Spleen (tissue), 13 donors: ENCODE measurements at regions of chr12 and their contacts with region 1.

Region 1: GRCh38 chr12:95820102-95820703 is 29.6 kb upstream of the NTN4 start:
- DNase-seq: no peak
- H3K4me3 ChIP-seq: no peak overlapping the region
- H3K27ac ChIP-seq: no peak overlapping the region
- H3K4me1 ChIP-seq: peaks cover 0 to 5% (median 0%) of the 10 kb centered on the region in 6 donors
- H3K27me3 ChIP-seq: peaks cover 0 to 3% (median 0%) of the 10 kb centered on the region in 7 donors
- CTCF ChIP-seq: peak in 8 of 11 experiments; percentile 8 to 72 (median 54)
- POLR2A ChIP-seq: no peak

Region 2: GRCh38 chr12:95096852-95097251 is 723.4 kb before region 1 on chr12:
- intact Hi-C with region 1: no loop called
- DNase-seq: no peak
- H3K4me3 ChIP-seq: no peak overlapping the region
- H3K27ac ChIP-seq: no peak overlapping the region
- H3K4me1 ChIP-seq: peaks cover 0 to 13% (median 5%) of the 10 kb centered on the region in 6 donors
- H3K27me3 ChIP-seq: no peaks in the 10 kb centered on the region
- CTCF ChIP-seq: no peak
- POLR2A ChIP-seq: no peak

Region 3: GRCh38 chr12:95582230-95583058 is 237.8 kb before region 1 on chr12:
- intact Hi-C with region 1: loop called (anchors 10 kb)
- DNase-seq: no peak
- H3K4me3 ChIP-seq: no peak overlapping the region
- H3K27ac ChIP-seq: no peak overlapping the region
- H3K4me1 ChIP-seq: peaks cover 0 to 9% (median 0%) of the 10 kb centered on the region in 6 donors
- H3K27me3 ChIP-seq: peaks cover 0 to 3% (median 0%) of the 10 kb centered on the region in 7 donors
- CTCF ChIP-seq: peak in 7 of 11 experiments; percentile 25 to 53 (median 36)
- POLR2A ChIP-seq: no peak

Region 4: GRCh38 chr12:95683418-95683817 is 136.8 kb before region 1 on chr12:
- intact Hi-C with region 1: no loop called
- DNase-seq: no peak
- H3K4me3 ChIP-seq: no peak overlapping the region
- H3K27ac ChIP-seq: no peak overlapping the region
- H3K4me1 ChIP-seq: no peaks in the 10 kb centered on the region
- H3K27me3 ChIP-seq: no peaks in the 10 kb centered on the region
- CTCF ChIP-seq: no peak
- POLR2A ChIP-seq: no peak

Region 5: DNA sequence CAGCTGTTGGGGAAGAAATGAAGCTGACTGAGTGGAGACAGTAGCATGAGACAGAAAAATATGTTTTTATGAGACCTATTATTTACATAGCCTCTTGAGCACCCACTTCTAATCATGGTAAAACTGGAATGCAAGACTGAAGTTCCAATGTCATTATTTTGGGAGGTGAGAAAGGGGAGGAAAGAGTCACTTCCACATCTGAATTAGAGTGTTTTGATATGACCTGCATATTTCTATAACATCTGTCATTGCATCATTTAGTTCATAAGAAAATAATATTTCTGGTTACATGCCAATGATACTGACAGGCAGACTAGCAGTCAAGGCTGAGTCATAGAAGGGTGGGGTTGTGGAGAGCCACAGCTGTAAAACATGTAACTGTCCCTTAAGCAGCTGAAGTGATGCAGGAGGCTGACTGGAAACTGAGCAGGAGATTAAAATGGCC is 56.4 kb before region 1 on chr12:
- intact Hi-C with region 1: no loop called
- DNase-seq: no peak
- H3K4me3 ChIP-seq: no peak overlapping the region
- H3K27ac ChIP-seq: peak overlapping the region in 3 of 8 donors; percentile 14 to 33 (median 29)
- H3K4me1 ChIP-seq: peaks cover 0 to 28% (median 6%) of the 10 kb centered on the region in 6 donors
- H3K27me3 ChIP-seq: peaks cover 0 to 13% (median 0%) of the 10 kb centered on the region in 7 donors
- CTCF ChIP-seq: no peak
- POLR2A ChIP-seq: no peak

Region 6: DNA sequence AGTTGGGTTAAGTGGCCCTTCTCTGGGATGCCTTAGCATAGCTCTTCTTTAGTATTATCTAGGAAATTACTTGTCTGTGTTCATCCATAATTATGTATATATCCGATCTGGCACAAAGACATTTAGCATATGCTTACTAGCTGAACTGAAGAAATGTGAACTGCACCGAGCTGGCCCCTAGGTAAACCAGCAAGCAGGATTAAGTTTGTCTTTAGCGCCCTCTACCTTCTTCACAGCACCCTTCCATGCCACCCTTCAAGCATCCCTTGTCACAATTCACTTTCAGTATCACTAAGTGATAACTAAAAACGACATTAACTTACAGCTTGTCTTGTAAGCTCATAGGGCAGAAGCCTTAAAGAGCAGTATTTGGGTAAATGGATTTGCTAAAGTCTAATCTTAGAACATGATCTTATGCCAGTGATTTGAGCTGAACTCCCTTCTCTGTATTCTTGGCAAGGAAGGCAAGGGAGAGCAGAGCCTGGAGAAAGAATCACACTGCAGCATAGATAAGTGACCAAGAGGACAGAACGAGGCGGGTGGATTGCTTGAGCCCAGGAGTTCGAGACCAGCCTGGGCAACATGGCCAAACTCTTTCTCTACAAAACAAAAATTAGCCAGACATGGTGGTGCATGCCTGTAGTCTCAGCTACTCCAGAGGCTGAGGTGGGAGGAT is 178.5 kb after region 1 on chr12:
- intact Hi-C with region 1: loop called (anchors 10 kb)
- DNase-seq: no peak
- H3K4me3 ChIP-seq: no peak overlapping the region
- H3K27ac ChIP-seq: peak overlapping the region in 3 of 8 donors; percentile 84 to 91 (median 84)
- H3K4me1 ChIP-seq: peaks cover 0 to 24% (median 6%) of the 10 kb centered on the region in 6 donors
- H3K27me3 ChIP-seq: no peaks in the 10 kb centered on the region
- CTCF ChIP-seq: peak; percentile 69 to 90 (median 81)
- POLR2A ChIP-seq: no peak